Activated T-helper 2 cell treated with anti-CD3 and anti-CD28 coated beads, Interferon-gamma antibody, Interleukin-2, Interleukin-4, amounts not matched to agents 10 μg/mL and 5 μg/mL and 100 μg/mL, durations not matched to agents 14 hours and 24 hours and 36 hours (primary cell): ENCODE measurements at regions of chrX and their contacts with region 1.

Region 1: DNA sequence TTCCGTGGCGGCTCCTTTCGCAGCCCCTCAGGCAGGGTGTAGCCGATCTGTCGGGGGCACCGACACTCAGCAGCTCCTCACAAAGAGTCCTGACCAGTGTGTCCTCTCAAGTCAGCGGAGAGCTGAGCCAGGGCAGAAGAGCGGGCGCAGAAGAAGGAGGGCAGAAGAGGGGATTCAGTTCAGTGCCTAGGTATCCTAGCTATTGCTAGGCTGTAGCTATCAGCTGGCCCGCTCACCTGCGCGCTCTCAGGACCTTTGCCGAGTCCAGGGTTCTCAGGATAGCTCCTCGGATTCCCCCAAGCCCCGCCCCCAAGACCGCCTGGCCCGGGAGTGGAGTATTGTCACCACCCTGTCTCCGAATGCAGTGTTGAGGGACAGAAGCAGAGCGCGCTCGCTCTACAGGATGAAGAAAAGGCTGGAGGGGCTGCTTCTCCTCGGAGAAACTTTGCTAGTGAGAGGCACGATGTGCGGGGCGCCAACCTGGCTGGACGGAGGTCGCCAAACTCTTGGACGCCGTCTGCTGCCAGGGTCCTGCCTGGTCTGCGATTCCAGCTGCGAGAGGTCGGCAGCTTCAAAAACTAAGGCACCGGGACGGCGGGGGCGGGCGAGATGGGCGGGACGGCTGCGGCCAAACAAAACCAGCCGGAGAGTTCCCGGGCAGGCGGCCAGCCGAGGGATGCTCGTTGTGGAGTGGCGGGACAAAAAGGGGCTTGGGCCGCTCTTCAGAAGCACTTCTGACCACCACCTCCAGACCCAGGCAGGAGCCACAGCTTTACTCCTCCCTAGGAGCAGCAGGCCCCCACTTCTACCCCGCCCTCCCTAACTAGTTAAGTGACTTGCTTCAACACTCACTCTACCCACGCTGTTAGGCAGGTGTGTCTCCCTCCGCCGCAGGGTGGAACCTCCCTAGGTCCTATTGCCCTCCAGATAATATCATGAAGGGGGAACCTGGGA is at the start of gene XKRX:
- DNase-seq: peak; percentile 8
- H3K4me3 Mint-ChIP-seq: peak within 1 kb of the TSS; percentile 79
- H3K27ac Mint-ChIP-seq: no peak within 1 kb of the TSS
- H3K4me1 Mint-ChIP-seq: peaks cover 18% of the 10 kb centered on the region
- H3K27me3 Mint-ChIP-seq: peaks cover 1% of the 10 kb centered on the region
- total RNA-seq, gene XKRX: 0.23 and 0.25 TPM in 2 replicates

Region 2: DNA sequence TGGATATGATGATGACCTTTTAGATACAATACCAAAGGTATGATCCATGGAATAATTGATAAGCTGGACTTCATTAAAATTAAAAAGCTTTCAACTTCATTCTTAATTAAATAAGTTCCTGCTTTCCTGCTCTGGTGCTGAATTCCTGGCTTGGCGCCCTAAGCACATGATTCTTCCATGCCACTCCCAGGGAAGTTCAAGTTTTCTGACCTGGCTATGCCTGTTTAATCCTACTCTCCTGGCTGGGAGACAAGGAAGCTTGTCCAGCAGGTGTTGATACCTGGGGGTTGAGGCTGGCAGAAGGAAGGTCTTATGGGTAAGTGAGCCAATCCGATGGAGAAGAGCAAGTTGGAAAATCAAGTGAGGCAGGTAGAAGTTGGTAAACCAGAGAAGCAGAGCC is 24.5 kb before region 1 on chrX:
- intact Hi-C with region 1: no loop called
- DNase-seq: no peak
- H3K4me3 Mint-ChIP-seq: no peak overlapping the region
- H3K27ac Mint-ChIP-seq: no peak overlapping the region
- H3K4me1 Mint-ChIP-seq: no peaks in the 10 kb centered on the region
- H3K27me3 Mint-ChIP-seq: no peaks in the 10 kb centered on the region

Region 3: DNA sequence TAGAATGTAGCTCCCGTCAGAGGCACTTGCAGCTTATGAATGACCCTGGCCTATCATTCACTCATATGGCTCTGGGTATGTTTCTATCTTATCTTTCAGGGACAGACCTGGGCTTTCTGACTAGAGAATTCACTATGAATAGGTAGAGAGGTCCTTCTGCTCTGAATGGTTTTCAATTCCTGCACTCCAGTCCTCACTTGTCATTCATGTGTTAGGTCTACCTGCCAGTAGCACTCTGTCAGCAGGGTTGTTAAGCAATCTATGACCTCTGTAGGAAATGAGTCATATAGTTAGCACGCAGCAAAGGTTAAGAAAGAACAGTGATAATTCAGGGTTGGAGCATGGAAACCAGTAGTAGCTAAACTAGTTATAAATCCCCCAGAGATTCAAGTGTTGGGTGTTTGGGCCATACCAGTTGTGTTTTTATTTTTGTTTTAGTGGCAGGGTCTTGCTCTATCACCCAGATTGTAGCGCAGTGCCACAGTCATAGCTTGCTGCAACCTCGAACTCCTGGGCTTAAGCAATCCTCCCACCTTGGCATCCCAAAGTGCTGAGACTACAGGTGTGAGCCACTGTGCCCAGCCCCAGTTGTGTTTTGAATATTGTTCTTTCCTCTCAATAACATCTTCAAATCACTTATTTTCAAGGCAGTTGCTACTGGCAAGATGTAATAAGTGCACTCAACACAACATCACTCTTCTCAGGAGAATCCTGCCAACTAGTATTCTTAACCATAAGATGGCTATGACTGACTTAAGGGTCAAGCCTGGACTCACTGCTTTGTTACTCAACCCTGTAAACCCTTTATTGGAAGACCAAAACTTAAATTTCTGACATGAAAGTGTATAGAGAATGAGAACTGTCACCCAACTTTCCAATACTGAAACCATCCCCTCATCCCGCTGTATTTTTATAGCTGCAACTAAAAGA is 65.7 kb after region 1 on chrX:
- intact Hi-C with region 1: loop called (anchors 2 kb)
- DNase-seq: no peak
- H3K4me3 Mint-ChIP-seq: peak overlapping the region; percentile 17
- H3K27ac Mint-ChIP-seq: peak overlapping the region; percentile 63
- H3K4me1 Mint-ChIP-seq: peaks cover 16% of the 10 kb centered on the region
- H3K27me3 Mint-ChIP-seq: no peaks in the 10 kb centered on the region

Region 4: DNA sequence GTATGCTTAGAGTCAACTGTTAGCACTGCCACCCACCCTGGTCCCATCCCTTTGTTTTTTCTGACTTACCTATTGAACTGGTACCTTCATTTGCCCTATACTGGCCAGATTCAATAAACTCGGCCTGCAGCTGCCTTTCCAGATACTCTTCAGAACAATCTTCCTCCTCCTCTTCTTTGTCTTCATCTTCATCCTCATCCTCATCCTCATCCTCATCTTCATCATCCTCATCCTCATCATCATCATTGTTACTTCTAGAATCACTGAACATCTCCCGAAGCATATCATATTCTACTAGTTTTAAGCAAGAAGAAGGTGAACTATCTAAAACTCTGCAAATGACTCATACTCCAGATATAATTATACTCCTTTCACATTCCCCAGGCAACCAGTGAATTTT is 347.3 kb after region 1 on chrX:
- intact Hi-C with region 1: no loop called
- DNase-seq: no peak
- H3K4me3 Mint-ChIP-seq: no peak overlapping the region
- H3K27ac Mint-ChIP-seq: no peak overlapping the region
- H3K4me1 Mint-ChIP-seq: no peaks in the 10 kb centered on the region
- H3K27me3 Mint-ChIP-seq: no peaks in the 10 kb centered on the region